Caco-2 (cell line): ENCODE measurements at regions of chr12 and their contacts with region 1.

Region 1: DNA sequence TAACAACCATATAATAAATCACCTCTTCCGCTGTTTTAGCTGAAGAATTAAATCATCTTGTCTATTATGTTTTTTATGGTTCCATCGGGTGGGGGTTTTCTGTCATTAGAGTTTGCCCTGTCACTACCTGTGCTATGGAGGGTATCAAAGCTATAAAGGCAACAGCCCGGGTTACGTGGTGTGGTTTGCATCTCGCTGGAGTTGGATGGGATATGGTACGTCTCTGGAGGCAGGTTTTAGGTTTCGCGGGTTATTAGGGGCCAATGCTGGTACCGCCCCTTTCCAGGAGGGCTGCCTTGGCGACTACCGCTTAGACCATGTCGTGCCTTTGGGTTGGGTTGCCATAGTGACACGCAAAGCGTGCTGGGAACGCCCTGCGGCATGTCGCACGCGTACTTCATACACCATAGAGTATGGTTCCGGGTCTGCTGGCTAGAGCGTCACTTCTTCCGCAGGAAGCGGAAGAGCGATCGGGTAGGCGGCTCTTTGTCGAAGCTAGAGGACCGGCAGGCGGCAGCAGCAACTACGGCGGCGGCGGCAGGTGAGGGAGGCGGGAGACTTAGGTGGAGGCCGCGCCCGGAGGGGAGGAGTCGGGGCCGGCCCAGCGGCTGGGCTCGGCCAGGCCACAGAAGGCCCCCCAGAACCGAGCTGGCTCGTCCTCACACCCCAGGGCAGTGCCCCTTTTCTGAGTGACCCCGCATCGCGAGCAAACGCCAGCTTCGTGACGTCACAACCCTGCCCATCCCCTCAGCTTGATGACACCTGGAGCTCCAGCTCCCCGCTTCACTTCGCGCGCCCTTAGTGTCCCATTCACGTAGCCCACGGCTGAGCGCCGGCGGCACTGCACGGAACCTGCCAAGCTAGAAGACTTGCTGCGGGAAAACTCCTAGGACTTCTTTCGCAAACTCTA is at the start of gene ZC3H10:
- DNase-seq: peak; percentile 98 to 99
- H3K4me3 ChIP-seq: peak within 1 kb of the TSS; percentile 70
- H3K4me3 Mint-ChIP-seq: peak within 1 kb of the TSS; percentile 97
- H3K27ac Mint-ChIP-seq: peak within 1 kb of the TSS; percentile 100
- H3K4me1 ChIP-seq: peaks cover 18% of the 10 kb centered on the region
- H3K4me1 Mint-ChIP-seq: peaks cover 20% of the 10 kb centered on the region
- H3K27me3 ChIP-seq: no peaks in the 10 kb centered on the region
- H3K27me3 Mint-ChIP-seq: peaks cover 2% of the 10 kb centered on the region
- CTCF ChIP-seq: peak in 1 of 2 experiments; percentile 53
- total RNA-seq, gene ZC3H10: 3.5 and 4.4 TPM in 2 replicates

Region 2: DNA sequence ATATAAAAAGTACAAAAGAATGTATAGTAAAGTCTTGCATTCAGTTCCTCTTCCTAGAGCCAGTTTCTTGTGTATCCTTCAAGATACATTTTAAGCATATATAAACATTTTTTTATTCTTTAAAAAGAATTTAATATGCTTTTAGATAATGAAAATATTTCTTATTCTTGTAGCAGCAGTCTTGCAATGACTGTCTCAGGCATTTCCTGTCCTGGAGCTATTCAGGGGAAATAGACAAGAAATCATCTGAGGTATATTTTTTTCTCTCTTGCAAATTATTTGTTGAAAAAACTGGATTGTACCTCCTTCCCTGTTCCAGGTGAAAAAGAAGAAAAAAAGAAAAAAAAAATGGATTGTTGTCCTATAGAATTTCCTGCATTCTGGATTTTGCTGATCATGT is 55.0 kb before region 1 on chr12:
- CTCF ChIA-PET with region 1: no interaction called
- POLR2A ChIA-PET with region 1: no interaction called
- intact Hi-C with region 1: no loop called
- DNase-seq: no peak
- H3K4me3 ChIP-seq: no peak overlapping the region
- H3K4me3 Mint-ChIP-seq: no peak overlapping the region
- H3K27ac Mint-ChIP-seq: no peak overlapping the region
- H3K4me1 ChIP-seq: no peaks in the 10 kb centered on the region; the same call in 1 of the 2 replicates
- H3K4me1 Mint-ChIP-seq: no peaks in the 10 kb centered on the region
- H3K27me3 ChIP-seq: no peaks in the 10 kb centered on the region
- H3K27me3 Mint-ChIP-seq: no peaks in the 10 kb centered on the region
- CTCF ChIP-seq: no peak

Region 3: DNA sequence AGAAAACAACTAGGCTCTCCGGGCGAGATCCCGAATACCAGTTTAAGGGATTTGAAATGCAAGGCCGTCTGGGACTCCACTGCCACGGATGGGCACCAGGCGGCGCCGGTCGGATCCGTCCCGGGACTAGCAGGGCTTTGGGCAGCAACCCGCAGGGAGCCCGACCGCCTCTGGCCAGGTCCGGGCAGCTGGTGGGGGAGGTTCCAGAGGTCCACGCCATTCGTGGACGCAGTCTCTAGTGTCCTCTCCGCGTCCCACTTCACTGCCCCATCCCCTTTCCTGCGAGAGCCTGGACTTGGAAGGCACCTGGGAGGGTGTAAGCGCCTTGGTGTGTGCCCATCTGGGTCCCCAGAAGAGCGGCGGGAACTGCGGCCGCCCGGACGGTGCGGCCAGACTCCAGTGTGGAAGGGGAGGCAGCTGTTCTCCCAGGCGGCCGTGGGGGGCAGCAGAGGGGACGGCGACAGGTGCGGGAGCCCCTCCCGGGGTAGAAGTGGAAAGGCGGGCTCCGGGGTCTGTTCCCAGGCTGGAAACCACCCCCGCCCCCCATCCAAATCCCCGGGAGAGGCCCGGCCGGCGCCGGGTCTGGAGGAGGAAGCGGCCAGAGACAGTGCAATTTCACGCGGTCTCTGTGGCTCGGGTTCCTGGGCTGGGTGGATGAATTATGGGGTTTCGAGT is 38.9 kb before region 1 on chr12:
- CTCF ChIA-PET with region 1: no interaction called
- POLR2A ChIA-PET with region 1: interaction called, 4 read pairs
- intact Hi-C with region 1: loop called (anchors 1 kb)
- DNase-seq: peak; percentile 93 to 96
- H3K4me3 ChIP-seq: peak overlapping the region; percentile 74
- H3K4me3 Mint-ChIP-seq: peak overlapping the region; percentile 89
- H3K27ac Mint-ChIP-seq: peak overlapping the region; percentile 92
- H3K4me1 ChIP-seq: peaks cover 24% of the 10 kb centered on the region
- H3K4me1 Mint-ChIP-seq: peaks cover 7% of the 10 kb centered on the region
- H3K27me3 ChIP-seq: no peaks in the 10 kb centered on the region
- H3K27me3 Mint-ChIP-seq: no peaks in the 10 kb centered on the region
- CTCF ChIP-seq: peak; percentile 69 to 84

Region 4: DNA sequence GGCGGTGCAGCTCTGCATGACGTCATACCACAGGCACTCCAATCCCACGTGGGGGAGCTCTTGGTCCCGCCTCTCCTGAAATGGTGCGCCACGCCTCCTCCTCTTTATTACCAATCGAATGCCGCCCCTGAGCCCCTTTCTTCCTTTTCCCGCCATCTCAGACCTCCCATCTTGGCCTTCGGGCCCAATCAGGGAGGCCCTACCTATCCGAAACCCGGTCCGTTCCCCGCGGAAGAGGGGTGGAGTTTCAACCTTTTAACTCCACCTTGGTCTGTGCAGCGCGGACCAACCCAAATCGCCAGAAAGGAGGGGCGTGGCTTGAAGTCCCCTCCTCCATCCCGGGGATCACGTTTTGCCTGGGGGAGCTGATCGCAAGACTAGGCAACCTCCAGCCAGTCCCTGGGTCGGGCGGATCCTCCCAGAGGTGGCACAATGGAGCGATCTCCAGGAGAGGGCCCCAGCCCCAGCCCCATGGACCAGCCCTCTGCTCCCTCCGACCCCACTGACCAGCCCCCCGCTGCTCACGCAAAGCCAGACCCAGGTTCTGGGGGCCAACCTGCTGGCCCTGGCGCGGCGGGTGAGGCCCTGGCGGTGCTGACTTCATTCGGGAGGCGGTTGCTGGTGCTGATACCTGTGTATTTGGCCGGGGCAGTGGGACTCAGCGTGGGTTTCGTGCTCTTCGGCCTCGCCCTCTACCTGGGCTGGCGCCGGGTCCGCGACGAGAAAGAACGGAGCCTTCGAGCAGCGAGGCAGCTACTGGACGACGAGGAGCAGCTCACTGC is 10.0 kb after region 1 on chr12 and contains the start of gene ESYT1:
- CTCF ChIA-PET with region 1: interaction called, 66 read pairs
- POLR2A ChIA-PET with region 1: interaction called, 27 read pairs
- intact Hi-C with region 1: loop called (anchors 1 kb)
- DNase-seq: peak; percentile 99
- H3K4me3 ChIP-seq: peak within 1 kb of the TSS; percentile 75
- H3K4me3 Mint-ChIP-seq: peak within 1 kb of the TSS; percentile 89
- H3K27ac Mint-ChIP-seq: peak within 1 kb of the TSS; percentile 91
- H3K4me1 ChIP-seq: peaks cover 29% of the 10 kb centered on the region
- H3K4me1 Mint-ChIP-seq: peaks cover 35% of the 10 kb centered on the region
- H3K27me3 ChIP-seq: no peaks in the 10 kb centered on the region
- H3K27me3 Mint-ChIP-seq: no peaks in the 10 kb centered on the region
- CTCF ChIP-seq: no peak
- total RNA-seq, gene ESYT1: 70.4 and 79.0 TPM in 2 replicates

Region 5: DNA sequence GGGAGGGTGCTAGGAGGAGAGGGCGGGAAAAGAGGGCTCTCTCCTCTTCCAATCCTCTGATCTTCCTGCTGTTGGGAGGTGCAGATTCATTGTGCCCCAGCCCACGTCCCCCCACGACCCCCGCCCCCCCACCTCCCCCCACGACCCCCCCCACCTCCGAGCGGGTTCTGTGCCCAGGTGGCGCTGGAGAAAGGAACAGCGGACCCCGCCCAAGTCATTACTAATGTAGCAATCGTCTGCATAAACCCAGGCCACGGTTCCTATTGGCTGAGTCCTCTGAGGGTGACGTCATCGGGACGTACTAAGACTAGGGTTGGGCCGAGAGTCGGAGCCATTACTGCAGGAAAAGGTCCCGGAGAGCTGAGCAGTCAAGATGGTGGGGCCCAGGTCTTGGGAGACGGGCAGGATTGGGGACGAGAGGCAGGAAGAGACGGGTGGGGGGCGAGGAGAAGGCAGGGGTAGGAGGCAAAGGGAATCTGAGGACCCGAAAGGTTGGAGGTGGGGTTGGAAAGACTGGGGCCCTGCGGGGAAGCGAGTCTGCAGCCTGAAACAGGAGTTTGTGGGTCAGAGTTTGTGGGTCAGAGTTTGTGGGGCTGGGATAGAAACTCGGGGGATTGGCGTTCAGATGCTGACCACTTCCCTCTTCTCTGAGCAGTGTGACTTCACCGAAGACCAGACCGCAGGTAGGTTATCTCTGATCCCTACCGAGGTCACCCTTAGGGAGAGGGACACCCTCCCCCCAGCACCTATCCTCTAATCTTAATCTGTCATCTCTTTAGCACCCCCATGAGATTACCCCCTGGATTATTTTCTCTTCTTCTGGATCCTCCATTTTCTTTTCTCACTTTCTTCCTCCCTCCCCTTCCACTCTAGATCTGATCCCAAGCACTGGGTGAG is 40.2 kb after region 1 on chr12 and contains the start of gene MYL6:
- CTCF ChIA-PET with region 1: interaction called, 24 read pairs
- POLR2A ChIA-PET with region 1: interaction called, 9 read pairs
- intact Hi-C with region 1: loop called (anchors 1 kb)
- DNase-seq: peak; percentile 96 to 98
- H3K4me3 ChIP-seq: peak within 1 kb of the TSS; percentile 59
- H3K4me3 Mint-ChIP-seq: peak within 1 kb of the TSS; percentile 79
- H3K27ac Mint-ChIP-seq: peak within 1 kb of the TSS; percentile 88
- H3K4me1 ChIP-seq: peaks cover 16% of the 10 kb centered on the region
- H3K4me1 Mint-ChIP-seq: peaks cover 33% of the 10 kb centered on the region
- H3K27me3 ChIP-seq: no peaks in the 10 kb centered on the region
- H3K27me3 Mint-ChIP-seq: no peaks in the 10 kb centered on the region
- CTCF ChIP-seq: no peak
- total RNA-seq, gene MYL6: 960 and 1,174 TPM in 2 replicates

Region 6: GRCh38 chr12:56172831-56173230 is 54.8 kb after region 1 on chr12:
- CTCF ChIA-PET with region 1: no interaction called
- POLR2A ChIA-PET with region 1: no interaction called
- intact Hi-C with region 1: no loop called
- DNase-seq: no peak
- H3K4me3 ChIP-seq: no peak overlapping the region
- H3K4me3 Mint-ChIP-seq: no peak overlapping the region
- H3K27ac Mint-ChIP-seq: no peak overlapping the region
- H3K4me1 ChIP-seq: no peaks in the 10 kb centered on the region
- H3K4me1 Mint-ChIP-seq: peaks cover under 1% of the 10 kb centered on the region
- H3K27me3 ChIP-seq: no peaks in the 10 kb centered on the region
- H3K27me3 Mint-ChIP-seq: no peaks in the 10 kb centered on the region
- CTCF ChIP-seq: no peak

Region 7: GRCh38 chr12:56266693-56267442 is 148.8 kb after region 1 on chr12 and contains the start of gene COQ10A:
- CTCF ChIA-PET with region 1: no interaction called
- POLR2A ChIA-PET with region 1: no interaction called
- intact Hi-C with region 1: loop called (anchors 2 kb)
- DNase-seq: peak; percentile 90 to 92
- H3K4me3 ChIP-seq: peak within 1 kb of the TSS; percentile 65
- H3K4me3 Mint-ChIP-seq: peak within 1 kb of the TSS; percentile 83
- H3K27ac Mint-ChIP-seq: peak within 1 kb of the TSS; percentile 61
- H3K4me1 ChIP-seq: peaks cover 12% of the 10 kb centered on the region
- H3K4me1 Mint-ChIP-seq: peaks cover 12% of the 10 kb centered on the region
- H3K27me3 ChIP-seq: no peaks in the 10 kb centered on the region
- H3K27me3 Mint-ChIP-seq: no peaks in the 10 kb centered on the region
- CTCF ChIP-seq: peak; percentile 39 to 74
- total RNA-seq, gene COQ10A: 16.7 and 18.4 TPM in 2 replicates